Activated CD8-positive, alpha-beta memory T cell treated with anti-CD3 and anti-CD28 coated beads, Interleukin-2, amount 10 ng/mL, durations not matched to agents 7 days and 5 days (primary cell): ENCODE measurements at regions of chr1 and their contacts with region 1.

Region 1: GRCh38 chr1:23809751-23810171 is 9.2 kb upstream of the GALE start:
- DNase-seq: peak; percentile 91
- ATAC-seq: peak; percentile 98
- H3K4me3 Mint-ChIP-seq: no peak overlapping the region
- H3K27ac Mint-ChIP-seq: peak overlapping the region; percentile 33
- H3K4me1 Mint-ChIP-seq: peaks cover 18% of the 10 kb centered on the region
- H3K27me3 Mint-ChIP-seq: no peaks in the 10 kb centered on the region

Region 2: DNA sequence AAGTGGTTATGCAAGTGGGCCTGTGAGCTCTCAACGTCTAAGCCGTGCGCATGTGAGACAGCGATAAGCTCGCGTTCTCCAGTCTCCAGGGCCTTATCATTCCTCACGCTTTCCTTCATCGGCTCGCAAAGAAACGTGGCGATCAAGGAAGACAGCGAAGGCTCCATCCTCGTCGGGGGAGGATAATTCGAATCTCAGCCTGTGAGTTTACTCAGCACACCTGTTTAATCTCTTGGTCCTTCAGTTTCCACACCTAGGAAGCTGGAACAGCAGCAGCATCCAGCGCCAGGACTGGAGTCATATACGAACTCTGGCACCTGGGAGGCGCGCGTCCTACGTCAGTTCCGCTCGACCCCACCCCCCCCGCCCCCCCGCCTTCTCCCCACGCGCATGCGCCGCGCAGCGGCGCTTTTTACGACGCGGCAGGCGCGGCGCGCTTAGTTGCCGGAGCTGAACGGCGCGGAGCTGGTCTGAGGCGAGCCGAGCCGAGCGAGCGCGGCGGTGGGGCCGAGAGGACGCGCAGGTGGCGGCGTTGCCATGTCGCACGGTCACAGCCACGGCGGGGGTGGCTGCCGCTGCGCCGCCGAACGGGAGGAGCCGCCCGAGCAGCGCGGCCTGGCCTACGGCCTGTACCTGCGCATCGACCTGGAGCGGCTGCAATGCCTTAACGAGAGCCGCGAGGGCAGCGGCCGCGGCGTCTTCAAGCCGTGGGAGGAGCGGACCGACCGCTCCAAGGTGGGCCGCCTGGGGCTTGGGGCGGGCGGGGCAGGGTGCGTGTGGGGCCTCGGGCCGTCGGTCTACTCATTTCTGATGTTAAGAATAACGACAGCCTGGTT is 31.6 kb before region 1 on chr1 and contains the start of gene PITHD1:
- CTCF ChIA-PET with region 1: interaction called, 15 read pairs
- DNase-seq: peak; percentile 87
- ATAC-seq: peak; percentile 88
- H3K4me3 Mint-ChIP-seq: peak within 1 kb of the TSS; percentile 96
- H3K27ac Mint-ChIP-seq: peak within 1 kb of the TSS; percentile 94
- H3K4me1 Mint-ChIP-seq: peaks cover 59% of the 10 kb centered on the region
- H3K27me3 Mint-ChIP-seq: no peaks in the 10 kb centered on the region
- total RNA-seq, gene PITHD1: 52.9 to 67.1 TPM

Region 3: GRCh38 chr1:23825076-23825761 is 15.5 kb after region 1 on chr1 and contains the start of gene HMGCL:
- CTCF ChIA-PET with region 1: interaction called, 62 read pairs
- DNase-seq: peak; percentile 94
- ATAC-seq: peak; percentile 97
- H3K4me3 Mint-ChIP-seq: peak within 1 kb of the TSS; percentile 93
- H3K27ac Mint-ChIP-seq: peak within 1 kb of the TSS; percentile 94
- H3K4me1 Mint-ChIP-seq: peaks cover 20% of the 10 kb centered on the region
- H3K27me3 Mint-ChIP-seq: no peaks in the 10 kb centered on the region
- total RNA-seq, gene HMGCL: 23.8 to 29.0 TPM

Region 4: DNA sequence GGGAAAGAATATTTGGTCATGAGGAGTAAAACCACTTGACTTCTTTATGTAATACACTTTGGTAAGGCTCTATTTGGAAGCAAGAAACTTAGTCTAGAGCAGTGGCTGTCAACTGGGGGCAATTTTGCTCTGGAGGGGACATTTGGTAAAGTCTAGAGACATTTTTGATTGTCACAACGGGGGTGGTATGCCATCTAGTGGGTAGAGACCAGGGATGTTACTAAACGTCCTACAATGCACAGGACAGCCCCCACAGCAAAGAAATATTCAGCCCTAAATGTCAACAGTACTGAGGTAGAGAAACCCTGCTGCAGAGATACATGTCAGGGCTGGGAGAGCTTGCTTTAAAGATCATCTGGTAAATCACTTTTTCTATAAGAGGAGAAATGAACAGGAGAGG is 44.8 kb after region 1 on chr1:
- CTCF ChIA-PET with region 1: interaction called, 29 read pairs
- DNase-seq: peak; percentile 49
- ATAC-seq: peak; percentile 61
- H3K4me3 Mint-ChIP-seq: no peak overlapping the region
- H3K27ac Mint-ChIP-seq: peak overlapping the region; percentile 31
- H3K4me1 Mint-ChIP-seq: peaks cover 9% of the 10 kb centered on the region
- H3K27me3 Mint-ChIP-seq: no peaks in the 10 kb centered on the region

Region 5: DNA sequence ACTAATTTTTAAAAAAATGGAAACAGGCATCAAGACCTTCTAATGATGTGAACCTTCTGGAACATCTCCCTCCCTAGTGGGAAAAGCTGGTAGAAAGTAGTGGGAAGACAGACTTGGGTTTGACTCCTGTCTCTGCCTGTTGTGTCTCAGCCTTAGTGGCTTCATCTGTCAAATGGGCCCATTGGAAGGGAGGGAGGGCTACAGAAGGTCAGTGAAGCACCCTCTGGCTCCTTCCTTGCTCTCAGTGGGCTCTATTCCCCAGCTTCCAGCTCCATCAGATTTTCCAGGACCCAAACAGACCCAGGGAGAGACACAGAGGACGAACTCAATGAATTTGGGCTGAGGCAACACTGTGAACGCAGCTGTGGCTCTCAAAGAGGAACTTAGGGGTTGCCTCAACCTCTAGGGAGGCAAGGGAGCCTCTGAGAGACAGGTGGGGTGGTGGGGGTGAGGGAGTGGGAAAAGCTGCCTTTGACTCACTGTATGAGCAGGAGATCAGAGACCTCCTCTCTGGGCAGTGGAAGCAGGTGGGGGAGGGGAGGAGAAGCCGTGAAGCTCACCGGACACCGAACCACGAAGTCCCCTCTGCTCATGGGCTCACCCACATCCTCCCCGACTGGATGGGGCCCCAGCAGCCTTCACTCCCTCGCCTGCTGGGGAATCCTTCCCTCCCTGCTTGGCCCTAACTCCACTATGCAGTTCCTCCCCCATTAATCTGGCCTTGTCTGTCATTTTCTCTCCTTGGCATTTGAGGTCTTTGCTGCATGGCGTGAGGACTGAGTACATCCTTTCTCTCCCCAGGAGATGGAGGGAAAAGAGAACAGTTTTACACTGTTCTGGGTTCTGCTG is 99.0 kb after region 1 on chr1:
- CTCF ChIA-PET with region 1: interaction called, 24 read pairs
- DNase-seq: peak; percentile 71
- ATAC-seq: peak; percentile 52
- H3K4me3 Mint-ChIP-seq: no peak overlapping the region
- H3K27ac Mint-ChIP-seq: peak overlapping the region; percentile 2
- H3K4me1 Mint-ChIP-seq: peaks cover 71% of the 10 kb centered on the region
- H3K27me3 Mint-ChIP-seq: peaks cover 37% of the 10 kb centered on the region